ENCODE measurements at regions of chr21 and their contacts with region 1.

Region 1: GRCh38 chr21:45140346-45140940 is 66.1 kb downstream of the ADARB1 start:
- DNase-seq: peak; percentile 62 to 83 (median 76)
- ATAC-seq: peak; percentile 75 to 86 (median 86)
- H3K4me3 ChIP-seq: no peak overlapping the region
- H3K27ac ChIP-seq: no peak overlapping the region
- H3K4me1 ChIP-seq: peaks cover 0 to 26% (median 4%) of the 10 kb centered on the region in 12 donors
- H3K27me3 ChIP-seq: no peaks in the 10 kb centered on the region
- CTCF ChIP-seq: peak; percentile 61 to 81 (median 74)
- POLR2A ChIP-seq: no peak

Region 2: GRCh38 chr21:44873356-44874239 is 266.8 kb before region 1 on chr21 and contains the start of gene PTTG1IP:
- intact Hi-C with region 1: loop called in 1 of 10 experiments (anchors 10 kb)
- DNase-seq: peak; percentile 98 to 100 (median 99)
- ATAC-seq: peak; percentile 83 to 87 (median 85)
- H3K4me3 ChIP-seq: peak within 1 kb of the TSS; percentile 66 to 98 (median 86)
- H3K27ac ChIP-seq: peak within 1 kb of the TSS; percentile 90 to 99 (median 95)
- H3K4me1 ChIP-seq: peaks cover 0 to 81% (median 52%) of the 10 kb centered on the region in 12 donors
- H3K27me3 ChIP-seq: no peaks in the 10 kb centered on the region
- CTCF ChIP-seq: no peak
- POLR2A ChIP-seq: peak; percentile 69 to 92
- total RNA-seq, gene PTTG1IP: 134 to 319 (median 172) TPM

Region 3: GRCh38 chr21:44949779-44950198 is 190.7 kb before region 1 on chr21:
- intact Hi-C with region 1: loop called in 9 of 10 experiments (anchors 1 to 5 kb)
- DNase-seq: peak; percentile 89 to 94 (median 90)
- ATAC-seq: peak; percentile 59 to 68 (median 62)
- H3K4me3 ChIP-seq: no peak overlapping the region
- H3K27ac ChIP-seq: peak overlapping the region in 11 of 12 donors; percentile 42 to 96 (median 75)
- H3K4me1 ChIP-seq: peaks cover 0 to 87% (median 47%) of the 10 kb centered on the region in 12 donors
- H3K27me3 ChIP-seq: no peaks in the 10 kb centered on the region
- CTCF ChIP-seq: peak; percentile 90 to 97 (median 94)
- POLR2A ChIP-seq: no peak

Region 4: GRCh38 chr21:45074818-45075595 is 65.4 kb before region 1 on chr21:
- intact Hi-C with region 1: no loop called
- DNase-seq: peak in 1 of 5 donors; percentile 40
- ATAC-seq: peak in 3 of 4 donors; percentile 34 to 45 (median 43)
- H3K4me3 ChIP-seq: peak overlapping the region; percentile 58 to 100 (median 91)
- H3K27ac ChIP-seq: peak overlapping the region; percentile 33 to 96 (median 72)
- H3K4me1 ChIP-seq: peaks cover 0 to 51% (median 17%) of the 10 kb centered on the region in 12 donors
- H3K27me3 ChIP-seq: peaks cover 0 to 5% (median 0%) of the 10 kb centered on the region in 9 donors
- CTCF ChIP-seq: no peak
- POLR2A ChIP-seq: no peak

Region 5: GRCh38 chr21:45255381-45256020 is 115.1 kb after region 1 on chr21:
- intact Hi-C with region 1: loop called in 2 of 10 experiments (anchors 10 kb)
- DNase-seq: no peak
- ATAC-seq: no peak
- H3K4me3 ChIP-seq: no peak overlapping the region
- H3K27ac ChIP-seq: no peak overlapping the region
- H3K4me1 ChIP-seq: peaks cover 0 to 19% (median 5%) of the 10 kb centered on the region in 12 donors
- H3K27me3 ChIP-seq: peaks cover 0 to 32% (median 9%) of the 10 kb centered on the region in 9 donors
- CTCF ChIP-seq: no peak
- POLR2A ChIP-seq: no peak

Region 6: DNA sequence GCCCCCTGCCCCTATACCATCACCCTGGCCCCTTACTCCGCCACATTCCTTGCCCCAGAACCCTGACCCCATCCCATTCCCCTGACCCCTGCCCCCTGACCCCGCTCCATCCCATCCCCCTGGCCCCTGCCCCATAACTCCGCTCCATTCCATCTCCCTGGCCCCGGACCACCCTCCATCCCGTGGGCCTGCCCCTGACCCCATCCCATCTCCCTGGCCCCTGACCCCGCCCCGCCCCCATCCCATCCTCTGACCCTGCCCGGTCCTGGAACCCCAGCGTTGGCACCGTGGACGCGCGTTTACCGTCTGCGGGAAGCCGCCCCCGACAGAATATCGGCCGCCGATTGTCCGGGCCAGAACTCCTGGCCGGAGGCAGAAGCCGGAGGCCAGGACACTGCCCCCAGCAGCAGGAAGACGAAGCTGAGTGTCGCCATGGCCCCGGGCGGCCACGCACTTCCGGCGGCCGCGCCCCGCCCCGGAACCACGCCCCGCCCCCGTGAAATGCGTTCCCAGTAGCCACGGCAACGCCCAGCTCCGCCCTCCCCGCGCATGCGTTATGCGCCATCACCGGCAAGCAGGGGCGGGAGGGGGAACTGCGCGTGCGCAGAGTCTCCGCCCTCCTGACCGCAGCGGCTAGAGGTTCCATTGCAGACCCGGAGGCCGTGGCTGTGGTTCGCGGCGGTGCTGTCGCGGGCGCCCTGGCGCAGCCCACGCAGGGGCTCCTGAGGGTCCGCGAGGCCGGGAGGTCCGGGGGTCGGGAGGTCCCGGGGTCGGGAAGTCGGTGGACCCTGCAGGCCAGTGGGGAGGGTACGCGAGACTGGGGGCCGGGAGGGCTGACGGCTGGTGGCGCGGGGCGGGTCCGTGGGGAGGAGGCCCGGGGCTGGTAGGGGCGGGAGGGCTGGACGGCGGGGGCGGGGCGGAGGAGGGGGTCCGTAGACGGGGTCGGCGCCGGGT is 147.3 kb after region 1 on chr21 and contains the start of gene POFUT2:
- intact Hi-C with region 1: loop called in 3 of 10 experiments (anchors 5 to 10 kb)
- DNase-seq: peak; percentile 97 to 99 (median 97)
- ATAC-seq: peak; percentile 83 to 93 (median 89)
- H3K4me3 ChIP-seq: peak within 1 kb of the TSS; percentile 47 to 91 (median 76)
- H3K27ac ChIP-seq: peak within 1 kb of the TSS; percentile 50 to 90 (median 80)
- H3K4me1 ChIP-seq: peaks cover 0 to 38% (median 25%) of the 10 kb centered on the region in 12 donors
- H3K27me3 ChIP-seq: no peaks in the 10 kb centered on the region
- CTCF ChIP-seq: no peak
- POLR2A ChIP-seq: peak; percentile 37 to 88
- total RNA-seq, gene POFUT2: 10.8 to 22.0 (median 18.5) TPM

Region 7: DNA sequence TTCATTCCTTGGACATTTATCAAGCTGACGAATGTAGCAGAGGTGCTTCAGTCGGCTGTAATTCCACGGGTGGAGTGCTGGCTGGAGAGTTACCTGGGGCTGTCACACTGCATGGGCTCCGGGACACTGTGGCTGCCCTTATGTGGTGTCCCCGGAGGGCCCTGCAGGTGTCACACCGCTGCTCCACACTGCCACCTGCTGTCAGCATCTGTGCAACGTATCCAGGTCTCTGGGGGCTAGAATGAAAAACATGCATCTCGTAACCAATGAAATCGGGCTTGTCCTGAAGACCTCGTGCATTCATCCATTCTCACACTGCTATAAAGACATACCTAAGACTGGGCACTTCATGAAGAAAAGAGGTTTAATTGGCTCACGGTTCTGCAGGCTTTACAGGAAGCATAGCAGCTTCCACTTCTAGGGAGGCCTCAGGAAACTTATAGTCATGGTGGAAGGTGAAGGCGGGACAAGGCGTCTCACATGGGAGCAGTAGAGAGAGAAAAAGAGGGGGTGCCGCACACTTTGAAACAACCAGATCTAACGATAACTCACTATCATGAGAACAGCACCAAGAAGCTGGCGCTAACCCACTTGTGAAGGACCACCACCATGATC is 456.4 kb after region 1 on chr21:
- intact Hi-C with region 1: loop called in 1 of 10 experiments (anchors 10 kb)
- DNase-seq: peak; percentile 58 to 86 (median 66)
- ATAC-seq: peak in 3 of 4 donors; percentile 82 to 85 (median 85)
- H3K4me3 ChIP-seq: no peak overlapping the region
- H3K27ac ChIP-seq: no peak overlapping the region
- H3K4me1 ChIP-seq: peaks cover 0 to 3% (median 0%) of the 10 kb centered on the region in 12 donors
- H3K27me3 ChIP-seq: peaks cover 0 to 46% (median 5%) of the 10 kb centered on the region in 9 donors
- CTCF ChIP-seq: peak; percentile 63 to 88 (median 74)
- POLR2A ChIP-seq: no peak